GM12878 (cell line): ENCODE measurements at regions of chr19 and their contacts with region 1.

Region 1: DNA sequence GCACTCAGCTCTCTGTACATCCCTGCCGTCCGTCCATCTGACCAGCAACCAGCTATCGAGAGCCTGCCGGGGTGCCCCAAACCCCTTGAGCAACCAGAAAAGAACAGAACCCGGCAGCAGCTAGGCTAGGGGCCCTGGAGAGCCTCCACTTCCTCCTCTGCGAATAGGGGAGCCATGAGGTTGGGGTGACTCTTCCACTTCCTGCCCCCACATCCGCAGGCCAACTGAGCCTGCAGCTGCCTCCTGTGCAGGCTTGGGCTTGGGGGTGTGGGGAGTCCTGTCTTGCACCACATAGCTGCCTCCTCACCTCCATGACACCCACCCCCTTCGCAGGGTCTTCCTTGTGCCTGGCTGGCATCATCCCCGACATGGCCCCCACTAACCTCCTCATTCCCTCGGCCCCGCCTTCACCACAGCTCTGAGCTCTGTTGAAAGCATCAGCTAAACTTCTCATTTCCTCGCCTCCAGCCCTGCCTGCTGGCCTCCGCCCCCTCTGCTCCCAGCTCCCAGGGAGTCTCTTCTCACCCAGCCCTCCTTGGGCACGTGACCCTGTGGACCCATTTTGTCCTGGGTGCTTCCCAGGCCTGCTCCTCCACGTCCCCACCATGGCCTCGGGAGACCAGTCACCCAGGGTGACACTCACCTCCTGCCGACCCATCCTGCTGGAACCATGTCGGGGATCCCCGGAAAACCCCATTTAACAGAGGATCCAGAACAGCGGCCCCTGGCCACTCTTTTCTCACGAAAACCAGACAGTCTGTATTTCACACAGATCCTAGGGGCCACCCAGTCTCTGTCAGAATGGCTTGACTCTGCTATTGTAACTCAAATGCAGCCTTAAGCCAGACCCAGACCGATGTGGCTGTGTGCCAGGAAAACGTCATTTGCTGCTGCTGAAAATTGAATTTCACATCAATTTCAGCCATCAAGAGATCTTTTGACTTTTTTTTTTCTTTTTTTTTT is 50.4 kb downstream of the MYO9B start:
- DNase-seq: peak; percentile 79
- ATAC-seq: peak; percentile 80
- H3K4me3 ChIP-seq: peak overlapping the region; percentile 61
- H3K27ac ChIP-seq: peak overlapping the region; percentile 97
- H3K4me1 ChIP-seq: peaks cover 48% of the 10 kb centered on the region
- H3K27me3 ChIP-seq: no peaks in the 10 kb centered on the region
- CTCF ChIP-seq: 0 out of 6 replicates have a peak, but pooled peaks of 1 of the 3 experiments have one; percentile 11
- EP300 ChIP-seq: peak; percentile 12 to 54; a peak in 1 of 4 replicates
- POLR2A ChIP-seq: peak; percentile 79
- RAD21 ChIP-seq: peak; percentile 23; the same call in 1 of the 2 replicates

Region 2: GRCh38 chr19:17052439-17053210 is 73.4 kb before region 1 on chr19:
- CTCF ChIA-PET with region 1: no interaction called
- POLR2A ChIA-PET with region 1: no interaction called
- RAD21 ChIA-PET with region 1: no interaction called
- SMC1A ChIA-PET with region 1: no interaction called
- in situ Hi-C with region 1: no loop called
- intact Hi-C with region 1: no loop called
- DNase-seq: no peak
- ATAC-seq: peak; percentile 59; the same call in 2 of the 3 replicates
- H3K4me3 ChIP-seq: no peak overlapping the region
- H3K27ac ChIP-seq: no peak overlapping the region
- H3K4me1 ChIP-seq: no peaks in the 10 kb centered on the region
- H3K27me3 ChIP-seq: no peaks in the 10 kb centered on the region
- CTCF ChIP-seq: peak; percentile 40 to 52 (median 40); a peak in 5 of 6 replicates
- EP300 ChIP-seq: no peak
- POLR2A ChIP-seq: no peak
- RAD21 ChIP-seq: peak; percentile 47

Region 3: DNA sequence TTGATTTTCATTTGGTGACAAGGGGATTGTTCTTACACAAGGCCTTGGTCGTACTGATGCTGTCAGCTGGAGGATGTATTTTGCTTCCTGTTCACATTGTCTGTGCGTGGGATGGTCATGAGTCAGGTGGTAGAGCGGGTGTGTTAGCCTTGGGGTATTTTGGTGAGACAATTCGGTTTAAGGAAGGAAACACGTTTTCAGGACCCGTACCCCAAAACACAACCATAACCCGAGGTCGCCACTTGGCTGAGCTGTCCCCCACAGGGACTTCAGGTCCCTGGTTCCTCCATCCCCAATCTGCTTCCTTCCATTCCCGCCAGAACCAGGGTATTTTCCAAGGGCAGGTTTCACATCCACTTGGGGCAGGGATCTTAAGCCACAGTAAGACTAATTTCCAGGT is 35.4 kb before region 1 on chr19:
- CTCF ChIA-PET with region 1: no interaction called
- POLR2A ChIA-PET with region 1: interaction called, 7 read pairs
- RAD21 ChIA-PET with region 1: interaction called, 7 read pairs
- SMC1A ChIA-PET with region 1: interaction called, 88 read pairs
- in situ Hi-C with region 1: no loop called
- intact Hi-C with region 1: no loop called
- DNase-seq: no peak
- ATAC-seq: peak; percentile 66
- H3K4me3 ChIP-seq: no peak overlapping the region
- H3K27ac ChIP-seq: peak overlapping the region; percentile 71
- H3K4me1 ChIP-seq: peaks cover 31% of the 10 kb centered on the region
- H3K27me3 ChIP-seq: no peaks in the 10 kb centered on the region
- CTCF ChIP-seq: no peak
- EP300 ChIP-seq: no peak
- POLR2A ChIP-seq: no peak
- RAD21 ChIP-seq: peak; percentile 11; the same call in 1 of the 2 replicates

Region 4: GRCh38 chr19:17107525-17108452 is 18.2 kb before region 1 on chr19:
- CTCF ChIA-PET with region 1: interaction called, 30 read pairs
- POLR2A ChIA-PET with region 1: interaction called, 64 read pairs
- RAD21 ChIA-PET with region 1: interaction called, 90 read pairs
- SMC1A ChIA-PET with region 1: interaction called, 66 read pairs
- in situ Hi-C with region 1: no loop called
- intact Hi-C with region 1: loop called (anchors 2 kb)
- DNase-seq: no peak
- ATAC-seq: no peak
- H3K4me3 ChIP-seq: no peak overlapping the region
- H3K27ac ChIP-seq: peak overlapping the region; percentile 61
- H3K4me1 ChIP-seq: peaks cover 79% of the 10 kb centered on the region
- H3K27me3 ChIP-seq: no peaks in the 10 kb centered on the region
- CTCF ChIP-seq: no peak
- EP300 ChIP-seq: no peak
- POLR2A ChIP-seq: no peak; the same call in 1 of the 2 replicates
- RAD21 ChIP-seq: no peak

Region 5: DNA sequence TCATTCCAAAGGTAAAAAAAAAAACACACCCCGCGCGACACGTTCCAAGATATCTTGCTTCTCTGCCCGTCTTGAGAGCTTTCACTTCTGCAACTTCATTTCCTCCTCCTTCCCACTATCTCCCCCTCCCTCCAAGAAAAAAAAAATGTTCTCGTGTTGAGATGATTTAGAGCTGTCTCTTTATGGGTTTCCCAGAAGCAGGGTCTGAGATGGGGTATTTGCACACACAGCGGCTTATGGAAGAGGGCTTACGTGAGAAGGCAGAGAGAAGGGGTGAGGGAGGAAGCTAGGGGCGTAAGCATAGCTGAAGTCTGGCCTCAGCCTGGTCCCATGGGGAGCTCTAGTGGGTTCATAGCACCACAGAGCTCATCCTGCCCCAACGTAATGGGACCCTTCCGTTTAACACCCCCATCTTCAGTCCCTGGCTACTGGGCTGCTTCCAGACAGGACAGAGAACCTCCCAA is 57.9 kb after region 1 on chr19:
- CTCF ChIA-PET with region 1: interaction called, 4 read pairs
- POLR2A ChIA-PET with region 1: interaction called, 9 read pairs
- RAD21 ChIA-PET with region 1: interaction called, 12 read pairs
- SMC1A ChIA-PET with region 1: interaction called, 3 read pairs
- in situ Hi-C with region 1: no loop called
- intact Hi-C with region 1: no loop called
- DNase-seq: peak; percentile 45
- ATAC-seq: peak; percentile 80
- H3K4me3 ChIP-seq: no peak overlapping the region
- H3K27ac ChIP-seq: peak overlapping the region; percentile 87
- H3K4me1 ChIP-seq: peaks cover 24% of the 10 kb centered on the region
- H3K27me3 ChIP-seq: no peaks in the 10 kb centered on the region
- CTCF ChIP-seq: no peak
- EP300 ChIP-seq: no peak; a peak in 1 of 4 replicates
- POLR2A ChIP-seq: no peak
- RAD21 ChIP-seq: 0 out of 2 replicates have a peak, but pooled peaks have one; percentile 17